Dorsolateral prefrontal cortex (tissue), 120 donors: ENCODE measurements at regions of chr1 and their contacts with region 1.

Region 1: DNA sequence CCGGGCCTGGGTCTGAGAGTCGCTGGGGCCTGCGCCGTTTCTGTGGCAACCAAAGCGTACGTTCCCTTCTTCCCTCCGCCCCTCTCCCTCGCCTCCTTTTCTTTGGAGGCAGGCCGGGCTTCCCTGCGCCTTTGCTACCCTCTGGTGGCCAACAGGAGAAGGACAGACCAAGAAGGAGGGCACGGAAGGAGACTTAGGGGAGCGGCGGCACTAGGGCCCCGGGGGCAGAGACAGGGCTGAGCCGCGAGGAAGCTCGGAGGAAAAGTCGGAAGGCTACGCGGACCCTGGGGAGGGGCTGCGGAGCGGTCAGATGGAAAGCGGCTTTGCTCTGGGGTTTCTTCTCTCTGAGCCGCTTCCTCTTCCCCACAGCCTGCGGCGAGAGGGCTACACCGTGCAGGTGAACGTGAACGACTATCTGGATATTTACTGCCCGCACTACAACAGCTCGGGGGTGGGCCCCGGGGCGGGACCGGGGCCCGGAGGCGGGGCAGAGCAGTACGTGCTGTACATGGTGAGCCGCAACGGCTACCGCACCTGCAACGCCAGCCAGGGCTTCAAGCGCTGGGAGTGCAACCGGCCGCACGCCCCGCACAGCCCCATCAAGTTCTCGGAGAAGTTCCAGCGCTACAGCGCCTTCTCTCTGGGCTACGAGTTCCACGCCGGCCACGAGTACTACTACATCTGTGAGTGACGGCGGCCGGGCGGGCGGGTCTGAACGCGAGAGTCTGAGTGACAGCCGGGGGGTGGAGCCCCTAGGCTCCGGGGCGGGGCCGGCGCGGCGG is 6.3 kb downstream of the EFNA3 start:
- DNase-seq: peak; percentile 87 to 96 (median 94)
- H3K4me3 ChIP-seq: peak overlapping the region; percentile 49 to 91 (median 75)
- H3K27ac ChIP-seq: peak overlapping the region in 58 of 59 donors; percentile 59 to 96 (median 90)
- H3K27me3 ChIP-seq: peaks cover 0 to 45% (median 30%) of the 10 kb centered on the region in 45 donors
- CTCF ChIP-seq: peak; percentile 80 to 98 (median 91)

Region 2: DNA sequence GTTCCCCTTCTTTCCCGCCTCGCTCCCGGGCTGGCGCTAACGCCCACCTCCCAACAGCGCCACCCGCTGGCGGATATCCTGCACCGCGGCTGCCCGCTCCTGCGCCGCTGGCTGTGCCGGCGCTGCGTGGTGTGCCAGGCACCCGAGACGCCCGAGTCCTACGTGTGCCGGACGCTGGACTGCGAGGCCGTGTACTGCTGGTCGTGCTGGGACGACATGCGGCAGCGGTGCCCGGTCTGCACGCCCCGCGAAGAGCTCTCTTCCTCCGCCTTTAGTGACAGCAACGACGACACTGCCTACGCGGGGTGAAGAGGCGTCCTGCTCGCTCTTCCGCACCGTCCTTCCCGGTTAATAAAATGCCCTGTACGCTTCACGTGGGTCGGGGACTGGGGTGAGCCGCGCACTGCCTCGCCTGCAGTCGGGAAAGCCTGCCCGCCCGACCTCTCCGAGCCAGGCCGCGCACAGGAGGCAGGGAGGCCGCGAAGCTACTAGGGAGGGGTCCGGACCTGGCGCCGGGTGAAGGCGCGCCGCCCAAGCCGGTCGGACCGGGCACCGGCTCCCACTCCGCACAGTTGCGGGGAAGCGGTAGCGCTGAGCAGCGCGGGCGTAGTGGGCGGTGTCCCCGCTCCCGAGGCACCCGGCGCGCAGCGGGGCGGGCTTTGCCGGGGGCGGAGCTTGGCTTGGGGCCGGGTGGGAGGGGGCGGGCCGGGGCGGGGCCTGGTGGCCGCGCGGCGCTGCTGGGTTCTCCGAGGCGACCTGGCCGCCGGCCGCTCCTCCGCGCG is 34.2 kb before region 1 on chr1 and contains the start of gene ADAM15:
- intact Hi-C with region 1: loop called (anchors 2 kb)
- DNase-seq: peak; percentile 58 to 88 (median 70)
- H3K4me3 ChIP-seq: peak within 1 kb of the TSS; percentile 53 to 96 (median 81)
- H3K27ac ChIP-seq: peak within 1 kb of the TSS; percentile 51 to 98 (median 89)
- H3K27me3 ChIP-seq: no peaks in the 10 kb centered on the region
- CTCF ChIP-seq: peak; percentile 54 to 94 (median 84)
- total RNA-seq, gene ADAM15: 32.1 to 108 (median 62.7) TPM

Region 3: GRCh38 chr1:155063550-155064110 is 21.3 kb before region 1 on chr1 and contains the start of gene EFNA4:
- intact Hi-C with region 1: loop called (anchors 2 kb)
- DNase-seq: peak in 3 of 10 donors; percentile 64 to 73 (median 69)
- H3K4me3 ChIP-seq: peak within 1 kb of the TSS; percentile 38 to 78 (median 64)
- H3K27ac ChIP-seq: peak within 1 kb of the TSS in 26 of 59 donors; percentile 0 to 83 (median 57)
- H3K27me3 ChIP-seq: no peaks in the 10 kb centered on the region
- CTCF ChIP-seq: peak in 1 of 56 donors; percentile 9
- total RNA-seq, gene EFNA4: 0.41 to 3.5 (median 1.3) TPM in 114 of 120 experiments, not detected in the others

Region 4: GRCh38 chr1:155127105-155127964 is 42.4 kb after region 1 on chr1 and contains the start of gene EFNA1:
- intact Hi-C with region 1: loop called (anchors 2 kb)
- DNase-seq: peak; percentile 78 to 93 (median 86)
- H3K4me3 ChIP-seq: peak within 1 kb of the TSS; percentile 62 to 99 (median 85)
- H3K27ac ChIP-seq: peak within 1 kb of the TSS; percentile 79 to 100 (median 98)
- H3K27me3 ChIP-seq: no peaks in the 10 kb centered on the region
- CTCF ChIP-seq: peak in 8 of 56 donors; percentile 4 to 24 (median 6)
- total RNA-seq, gene EFNA1: 8.7 to 144 (median 30.1) TPM

Region 5: GRCh38 chr1:155167166-155168104 is 82.5 kb after region 1 on chr1:
- intact Hi-C with region 1: loop called in 1 of 2 experiments (anchors 1 kb)
- DNase-seq: peak; percentile 90 to 94 (median 92)
- H3K4me3 ChIP-seq: peak overlapping the region; percentile 16 to 71 (median 53)
- H3K27ac ChIP-seq: peak overlapping the region; percentile 34 to 95 (median 88)
- H3K27me3 ChIP-seq: no peaks in the 10 kb centered on the region
- CTCF ChIP-seq: peak; percentile 80 to 98 (median 87)